ENCODE measurements at regions of chr7 and their contacts with region 1.

Region 1: DNA sequence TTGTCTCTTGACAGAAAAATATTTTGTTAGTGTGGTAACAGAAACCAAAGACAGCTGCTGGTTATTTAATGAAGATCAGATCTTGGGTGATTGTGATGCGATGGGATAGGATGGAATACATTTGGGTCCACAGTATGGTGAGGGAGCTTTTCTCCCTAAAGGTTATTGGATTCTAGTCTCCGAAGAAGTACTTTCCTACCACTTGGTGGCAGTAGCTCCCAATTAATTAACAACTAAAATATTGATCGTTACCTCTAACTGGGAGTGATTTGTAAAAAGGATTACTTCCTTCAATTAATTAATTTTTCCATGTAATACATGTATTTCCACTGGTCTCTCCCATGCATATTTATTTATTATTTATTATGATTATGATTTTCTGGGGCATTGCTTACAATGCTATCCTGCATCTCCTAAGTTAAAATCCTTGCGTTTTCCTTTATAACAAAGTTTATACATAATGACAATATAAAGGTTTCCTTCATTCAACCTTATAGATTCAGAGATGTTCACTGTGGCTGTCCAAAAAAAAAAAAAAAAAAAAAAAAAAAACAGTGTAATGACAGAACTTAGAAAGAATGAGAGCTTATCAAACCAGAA is 25.6 kb downstream of the TMEM196 start:
- DNase-seq: no peak
- H3K4me3 ChIP-seq: no peak overlapping the region
- H3K27ac ChIP-seq: no peak overlapping the region
- H3K4me1 ChIP-seq: no peaks in the 10 kb centered on the region
- H3K27me3 ChIP-seq: no peaks in the 10 kb centered on the region
- CTCF ChIP-seq: peak; percentile 36 to 50 (median 47)
- EP300 ChIP-seq: no peak
- POLR2A ChIP-seq: no peak

Region 2: GRCh38 chr7:19708397-19709248 is 39.2 kb before region 1 on chr7 and contains the start of gene POLR1F:
- in situ Hi-C with region 1: no loop called
- intact Hi-C with region 1: no loop called
- DNase-seq: peak; percentile 95
- H3K4me3 ChIP-seq: peak within 1 kb of the TSS; percentile 73 to 90 (median 80)
- H3K27ac ChIP-seq: peak within 1 kb of the TSS; percentile 77 to 83 (median 82)
- H3K4me1 ChIP-seq: peaks cover 5 to 20% (median 14%) of the 10 kb centered on the region in 4 donors
- H3K27me3 ChIP-seq: no peaks in the 10 kb centered on the region
- CTCF ChIP-seq: peak; percentile 85 to 89 (median 88)
- EP300 ChIP-seq: no peak
- POLR2A ChIP-seq: peak; percentile 83
- total RNA-seq, gene POLR1F: 0.20 to 7.5 (median 3.7) TPM

Region 3: DNA sequence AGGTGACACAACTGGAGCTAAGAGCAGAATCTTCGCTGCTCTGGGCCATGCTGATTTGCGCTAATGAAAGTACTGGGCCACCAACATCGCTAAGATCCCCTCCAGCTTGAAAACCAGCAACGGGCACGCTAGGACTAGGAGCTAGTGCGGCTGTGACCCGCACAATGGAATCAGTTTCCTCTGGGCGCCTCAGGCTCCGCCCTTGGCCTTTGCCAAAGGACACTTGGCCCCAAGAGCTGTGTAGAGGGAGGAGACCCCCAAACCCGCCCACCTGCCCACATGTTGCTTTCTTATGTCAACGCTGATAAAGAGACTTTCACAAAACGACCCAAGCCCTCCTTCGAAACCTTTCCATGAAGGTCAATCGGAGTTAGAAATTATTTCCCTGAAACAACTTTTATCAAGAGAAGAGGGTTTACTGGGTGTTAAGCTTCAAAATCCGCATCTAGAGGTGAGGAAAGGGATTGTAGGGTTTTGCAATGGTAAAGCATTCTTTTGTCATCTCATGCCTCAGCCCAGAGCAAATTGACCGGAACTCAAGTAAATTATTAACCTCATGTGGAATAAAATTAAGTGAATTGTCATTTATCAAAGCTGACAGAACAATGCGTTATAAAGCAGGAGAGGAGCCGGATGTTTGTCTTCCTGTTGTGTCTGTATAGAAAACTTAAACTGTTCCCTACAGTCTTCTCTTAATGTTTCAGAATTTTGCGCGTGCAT is 877.0 kb after region 1 on chr7:
- in situ Hi-C with region 1: loop called in 1 of 4 experiments (anchors 25 kb)
- intact Hi-C with region 1: no loop called
- DNase-seq: no peak
- H3K4me3 ChIP-seq: no peak overlapping the region
- H3K27ac ChIP-seq: no peak overlapping the region
- H3K4me1 ChIP-seq: no peaks in the 10 kb centered on the region
- H3K27me3 ChIP-seq: no peaks in the 10 kb centered on the region
- CTCF ChIP-seq: no peak
- EP300 ChIP-seq: no peak
- POLR2A ChIP-seq: no peak

Measured in transverse colon (tissue), 4 donors.